PC-3 (cell line): ENCODE measurements at regions of chr3 and their contacts with region 1.

Region 1: DNA sequence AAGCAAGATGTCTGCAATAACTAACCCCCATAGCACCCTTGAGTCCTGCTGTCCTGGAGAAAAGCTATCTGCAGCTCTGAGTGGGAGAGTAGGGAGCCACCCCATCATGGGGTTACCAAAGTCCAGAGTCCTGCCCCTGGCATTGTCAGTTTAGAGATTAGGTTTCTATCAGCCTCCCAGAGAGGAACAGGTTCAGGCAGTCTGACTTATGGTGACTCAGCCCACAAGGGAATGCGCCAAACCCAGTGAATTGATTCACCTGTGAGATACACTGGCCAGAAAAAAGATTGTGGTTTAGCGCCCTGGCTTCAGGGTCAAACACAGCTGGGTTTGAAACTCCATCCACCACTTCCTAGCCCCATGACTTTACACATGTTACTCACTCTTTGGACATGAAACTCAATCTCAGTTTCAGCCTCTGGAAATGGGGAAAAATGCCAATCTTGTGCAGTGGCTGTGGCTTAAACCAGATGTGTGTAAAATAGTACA is 263.6 kb upstream of the HES1 start:
- DNase-seq: peak; percentile 99
- ATAC-seq: peak; percentile 68
- H3K4me3 ChIP-seq: no peak overlapping the region
- H3K27ac ChIP-seq: peak overlapping the region; percentile 76
- H3K4me1 ChIP-seq: peaks cover 47% of the 10 kb centered on the region
- H3K27me3 ChIP-seq: no peaks in the 10 kb centered on the region
- CTCF ChIP-seq: no peak

Region 2: DNA sequence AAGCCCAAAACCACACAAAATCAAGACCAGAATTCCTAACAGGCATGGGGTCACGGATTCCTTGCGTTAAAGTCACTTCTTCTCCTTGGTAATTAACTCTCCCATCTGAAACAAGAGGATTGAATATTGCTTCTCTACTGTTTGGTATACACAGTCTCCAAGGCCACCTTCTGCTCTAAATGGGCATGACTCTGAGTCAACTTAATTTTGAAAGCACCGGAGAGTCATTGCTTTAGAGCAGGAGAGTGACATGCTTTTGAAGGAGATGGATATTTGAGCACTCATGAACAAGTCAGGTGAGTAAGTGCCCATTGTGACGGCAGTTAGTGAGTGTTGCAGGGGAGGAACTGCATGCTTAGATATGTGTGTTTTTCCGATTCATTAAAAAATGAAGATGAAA is 149.2 kb before region 1 on chr3:
- CTCF ChIA-PET with region 1: no interaction called
- POLR2A ChIA-PET with region 1: no interaction called
- intact Hi-C with region 1: no loop called
- DNase-seq: no peak
- ATAC-seq: no peak
- H3K4me3 ChIP-seq: no peak overlapping the region
- H3K27ac ChIP-seq: no peak overlapping the region
- H3K4me1 ChIP-seq: no peaks in the 10 kb centered on the region
- H3K27me3 ChIP-seq: no peaks in the 10 kb centered on the region
- CTCF ChIP-seq: no peak

Region 3: DNA sequence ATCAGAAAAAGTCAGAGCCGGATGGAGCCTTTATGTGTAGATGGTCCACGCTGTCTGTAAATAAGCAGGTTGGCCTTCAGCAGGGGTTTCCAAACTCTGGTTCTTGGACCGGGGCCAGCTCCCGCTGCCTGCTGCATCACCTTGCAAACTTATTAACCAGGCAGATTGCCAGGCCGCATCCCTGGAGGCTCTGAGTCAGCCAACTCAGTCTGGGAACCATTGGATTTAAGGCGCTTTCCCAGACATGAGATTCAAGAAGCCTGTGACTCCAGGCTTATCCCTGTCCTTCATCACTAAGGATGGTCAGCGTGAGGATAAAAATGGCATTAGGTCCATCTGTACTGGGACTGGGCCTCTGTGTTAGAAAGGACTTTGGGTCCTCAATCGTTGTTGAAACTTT is 66.8 kb before region 1 on chr3:
- CTCF ChIA-PET with region 1: no interaction called
- POLR2A ChIA-PET with region 1: no interaction called
- intact Hi-C with region 1: loop called (anchors 1 kb)
- DNase-seq: peak; percentile 99
- ATAC-seq: peak; percentile 96
- H3K4me3 ChIP-seq: no peak overlapping the region
- H3K27ac ChIP-seq: peak overlapping the region; percentile 55
- H3K4me1 ChIP-seq: peaks cover 10% of the 10 kb centered on the region
- H3K27me3 ChIP-seq: no peaks in the 10 kb centered on the region
- CTCF ChIP-seq: no peak

Region 4: GRCh38 chr3:193851941-193852674 is 20.2 kb before region 1 on chr3:
- CTCF ChIA-PET with region 1: no interaction called
- POLR2A ChIA-PET with region 1: interaction called, 5 read pairs
- intact Hi-C with region 1: loop called (anchors 2 kb)
- DNase-seq: peak; percentile 31
- ATAC-seq: peak; percentile 57
- H3K4me3 ChIP-seq: peak overlapping the region; percentile 6; the same call in 1 of the 2 replicates
- H3K27ac ChIP-seq: peak overlapping the region; percentile 73
- H3K4me1 ChIP-seq: peaks cover 35% of the 10 kb centered on the region
- H3K27me3 ChIP-seq: no peaks in the 10 kb centered on the region
- CTCF ChIP-seq: no peak

Region 5: GRCh38 chr3:194003125-194004057 is 131.1 kb after region 1 on chr3:
- CTCF ChIA-PET with region 1: no interaction called
- POLR2A ChIA-PET with region 1: interaction called, 6 read pairs
- intact Hi-C with region 1: loop called (anchors 1 kb)
- DNase-seq: peak; percentile 90
- ATAC-seq: peak; percentile 79
- H3K4me3 ChIP-seq: peak overlapping the region; percentile 56
- H3K27ac ChIP-seq: peak overlapping the region; percentile 82
- H3K4me1 ChIP-seq: peaks cover 40% of the 10 kb centered on the region
- H3K27me3 ChIP-seq: no peaks in the 10 kb centered on the region
- CTCF ChIP-seq: no peak

Region 6: DNA sequence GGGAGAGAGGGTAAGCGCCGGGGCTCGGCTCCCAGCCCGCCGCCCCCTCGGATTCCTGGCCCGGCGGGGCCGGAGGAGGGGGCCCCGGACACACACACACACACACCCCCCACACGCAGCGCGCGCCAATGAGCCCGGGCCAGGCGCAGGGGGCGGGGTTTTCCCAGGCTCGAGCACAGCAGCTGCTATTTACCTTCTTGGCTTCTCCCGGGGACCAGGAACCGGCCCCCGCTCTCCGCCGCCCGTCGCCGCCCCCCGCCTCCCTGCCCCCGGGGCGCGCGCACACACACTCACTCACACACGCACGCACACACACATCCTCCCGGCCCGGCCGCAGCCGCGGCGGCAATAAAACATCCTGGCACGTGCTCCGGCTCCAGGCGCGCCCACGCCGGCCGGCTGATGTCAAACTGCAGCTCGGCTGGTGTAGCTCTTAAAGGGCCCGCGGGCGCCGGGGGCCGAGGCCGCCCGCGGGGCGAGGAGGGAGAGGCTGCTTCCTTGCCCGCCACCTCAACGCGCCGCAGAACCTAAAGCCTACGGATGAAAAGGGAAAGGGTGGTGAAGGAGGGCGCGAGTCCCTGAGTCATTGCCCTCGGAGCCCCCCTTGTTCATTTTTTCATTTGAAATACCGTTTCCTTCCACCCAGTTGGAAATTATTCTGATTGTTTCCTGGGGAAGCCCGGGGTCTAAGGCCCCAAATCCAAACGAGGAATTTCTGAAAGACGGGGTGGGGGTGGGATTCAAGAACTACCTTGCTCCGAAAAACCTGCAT is 262.6 kb after region 1 on chr3:
- CTCF ChIA-PET with region 1: no interaction called
- POLR2A ChIA-PET with region 1: interaction called, 21 read pairs
- intact Hi-C with region 1: loop called (anchors 1 kb)
- DNase-seq: peak; percentile 97
- ATAC-seq: peak; percentile 37
- H3K4me3 ChIP-seq: peak overlapping the region; percentile 89
- H3K27ac ChIP-seq: peak overlapping the region; percentile 67
- H3K4me1 ChIP-seq: peaks cover 58% of the 10 kb centered on the region
- H3K27me3 ChIP-seq: no peaks in the 10 kb centered on the region
- CTCF ChIP-seq: no peak

Region 7: GRCh38 chr3:194323785-194324735 is 451.8 kb after region 1 on chr3:
- CTCF ChIA-PET with region 1: no interaction called
- POLR2A ChIA-PET with region 1: no interaction called
- intact Hi-C with region 1: loop called (anchors 5 kb)
- DNase-seq: peak; percentile 96
- ATAC-seq: peak; percentile 57
- H3K4me3 ChIP-seq: peak overlapping the region; percentile 57
- H3K27ac ChIP-seq: peak overlapping the region; percentile 100
- H3K4me1 ChIP-seq: peaks cover 44% of the 10 kb centered on the region
- H3K27me3 ChIP-seq: no peaks in the 10 kb centered on the region
- CTCF ChIP-seq: no peak